Activated CD4-positive, alpha-beta memory T cell treated with anti-CD3 and anti-CD28 coated beads for 36 hours (primary cell): ENCODE measurements at regions of chr18 and their contacts with region 1.

Region 1: GRCh38 chr18:79405781-79406575 is 10.2 kb downstream of the NFATC1 start:
- DNase-seq: peak; percentile 94
- H3K4me3 Mint-ChIP-seq: peak overlapping the region; percentile 69
- H3K27ac Mint-ChIP-seq: peak overlapping the region; percentile 94
- H3K4me1 Mint-ChIP-seq: peaks cover 55% of the 10 kb centered on the region
- H3K27me3 Mint-ChIP-seq: no peaks in the 10 kb centered on the region

Region 2: DNA sequence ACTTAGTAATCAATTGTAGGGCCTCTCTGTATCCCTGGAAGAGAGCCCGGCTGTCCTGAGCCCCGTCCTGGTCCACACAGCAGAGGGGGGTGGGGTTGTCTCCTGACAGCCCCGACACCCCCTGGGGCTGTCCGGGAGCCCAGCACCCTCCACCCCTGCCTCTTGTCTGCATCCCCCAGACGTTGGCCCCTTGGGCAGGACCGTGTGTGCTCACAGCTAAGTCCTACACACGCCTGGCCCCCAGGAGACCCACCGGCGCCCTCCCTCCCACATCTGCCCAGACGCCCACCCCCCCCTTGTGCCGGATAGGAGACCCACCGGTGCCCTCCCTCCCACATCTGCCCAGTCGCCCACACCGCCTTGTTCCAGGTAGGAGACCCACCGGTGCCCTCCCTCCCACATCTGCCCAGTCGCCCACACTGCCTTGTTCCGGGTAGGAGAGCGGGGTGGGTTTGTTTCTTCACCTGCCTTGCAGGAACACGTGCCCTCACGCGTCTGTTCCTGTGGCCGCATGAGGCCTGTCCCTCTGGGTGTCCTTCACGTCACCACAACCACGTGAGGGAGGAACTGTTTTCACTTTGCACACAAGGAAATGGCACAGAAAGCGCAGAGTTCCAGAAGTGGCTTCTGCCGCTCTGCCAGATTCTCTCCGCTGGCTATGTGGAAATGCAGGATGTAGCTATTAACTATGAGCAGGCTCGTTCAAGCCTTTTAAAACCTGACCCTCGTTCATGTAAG is 71.3 kb before region 1 on chr18:
- CTCF ChIA-PET with region 1: no interaction called
- POLR2A ChIA-PET with region 1: no interaction called
- intact Hi-C with region 1: no loop called
- DNase-seq: no peak
- H3K4me3 Mint-ChIP-seq: no peak overlapping the region
- H3K27ac Mint-ChIP-seq: no peak overlapping the region
- H3K4me1 Mint-ChIP-seq: no peaks in the 10 kb centered on the region
- H3K27me3 Mint-ChIP-seq: no peaks in the 10 kb centered on the region

Region 3: DNA sequence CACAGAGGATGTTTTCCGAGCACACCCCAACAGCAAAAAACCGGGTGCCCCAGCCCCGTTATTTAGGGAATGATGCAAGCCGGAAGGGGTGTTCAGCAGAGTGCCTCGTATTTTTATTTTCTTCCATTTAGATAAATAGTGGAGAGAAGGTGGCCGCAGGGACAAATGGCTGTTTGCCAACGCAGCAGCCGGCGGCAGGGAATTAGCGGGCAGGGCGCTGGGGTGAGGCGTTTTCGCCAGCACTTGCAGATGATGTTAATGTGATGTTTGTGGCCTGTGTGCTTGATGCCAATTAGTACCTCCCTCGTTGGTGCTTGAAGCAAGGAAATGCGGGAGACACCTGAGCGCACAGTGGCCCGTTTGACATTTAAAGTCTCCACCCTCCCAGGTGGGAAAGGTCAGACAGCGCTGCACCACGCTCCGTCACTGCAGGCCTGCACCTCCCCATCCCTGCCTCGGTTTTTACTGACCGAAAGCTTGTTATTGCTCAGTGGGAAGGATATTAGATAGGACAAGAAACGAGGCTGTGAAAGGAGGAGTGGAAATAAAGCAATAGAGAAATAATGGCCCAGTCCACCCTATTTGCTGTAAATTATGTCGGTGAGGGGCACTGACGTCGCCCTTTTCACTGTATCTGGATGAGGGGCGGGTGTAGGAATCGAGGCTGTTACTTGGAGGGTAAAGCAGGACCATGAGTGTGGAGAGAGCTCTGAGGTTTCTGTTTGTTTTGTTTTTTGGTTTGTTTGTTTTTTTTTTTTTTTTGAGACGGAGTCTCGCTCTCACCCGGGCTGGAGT is 28.8 kb after region 1 on chr18:
- CTCF ChIA-PET with region 1: interaction called, 4 read pairs
- POLR2A ChIA-PET with region 1: interaction called, 8 read pairs
- intact Hi-C with region 1: loop called (anchors 1 kb)
- DNase-seq: no peak
- H3K4me3 Mint-ChIP-seq: no peak overlapping the region
- H3K27ac Mint-ChIP-seq: no peak overlapping the region
- H3K4me1 Mint-ChIP-seq: peaks cover 60% of the 10 kb centered on the region
- H3K27me3 Mint-ChIP-seq: no peaks in the 10 kb centered on the region